ENCODE measurements at regions of chr7 and their contacts with region 1.

Region 1: DNA sequence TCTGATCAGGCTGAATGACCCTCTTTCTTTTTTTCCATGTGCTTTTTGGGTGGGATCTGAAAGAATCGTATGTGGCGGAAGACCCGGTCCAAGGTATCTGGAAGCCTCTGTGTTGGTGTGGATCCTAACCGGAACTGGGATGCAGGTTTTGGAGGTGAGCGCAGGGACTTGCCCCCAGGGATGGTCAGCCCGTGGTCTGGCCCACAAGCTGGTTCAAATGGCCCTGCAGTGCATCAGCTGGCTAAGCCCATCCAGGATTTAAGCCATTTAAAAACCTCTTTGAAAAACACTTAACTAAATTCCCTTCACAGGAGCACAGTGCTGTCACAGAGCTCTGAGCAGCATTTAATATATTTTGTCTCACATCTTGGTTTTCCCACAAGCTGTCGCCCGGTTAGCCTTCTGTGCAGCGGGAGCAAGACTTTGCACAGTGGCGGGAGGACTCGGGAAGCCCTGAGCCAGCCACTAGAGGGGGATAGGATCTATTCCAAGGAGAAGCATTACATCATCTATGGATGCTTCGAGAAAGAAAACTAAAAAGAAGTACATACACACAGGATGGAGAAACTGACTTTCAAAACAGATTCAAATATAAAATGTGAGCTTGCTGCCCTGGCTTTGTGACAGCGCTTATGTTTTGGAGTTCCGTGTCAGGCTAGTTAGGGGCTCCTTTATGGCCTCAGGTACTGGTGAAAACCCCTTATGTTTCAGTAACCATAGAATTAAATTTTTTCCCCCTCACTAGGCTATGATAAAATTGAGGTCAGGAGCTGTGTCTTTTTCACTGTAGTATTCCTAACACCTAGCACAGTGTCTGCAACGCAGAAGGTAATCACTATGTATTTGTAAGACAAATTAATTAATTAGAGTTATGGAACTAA is 11.3 kb downstream of the CPA2 start:
- DNase-seq: peak in 5 of 6 donors; percentile 67 to 83 (median 71)
- ATAC-seq: peak; percentile 22 to 71 (median 45)
- H3K4me3 ChIP-seq: no peak overlapping the region
- H3K27ac ChIP-seq: peak overlapping the region in 2 of 4 donors; percentile 63 to 71
- H3K4me1 ChIP-seq: peaks cover 26 to 51% (median 28%) of the 10 kb centered on the region in 3 donors
- H3K27me3 ChIP-seq: no peaks in the 10 kb centered on the region
- CTCF ChIP-seq: peak in 2 of 4 donors; percentile 10 to 37

Region 2: GRCh38 chr7:130387628-130388403 is 109.8 kb after region 1 on chr7:
- intact Hi-C with region 1: loop called in 1 of 3 experiments (anchors 5 kb)
- DNase-seq: peak in 5 of 6 donors; percentile 42 to 84 (median 73)
- ATAC-seq: peak; percentile 9 to 48 (median 27)
- H3K4me3 ChIP-seq: no peak overlapping the region
- H3K27ac ChIP-seq: peak overlapping the region; percentile 91 to 96 (median 96)
- H3K4me1 ChIP-seq: peaks cover 0 to 7% (median 0%) of the 10 kb centered on the region in 3 donors
- H3K27me3 ChIP-seq: no peaks in the 10 kb centered on the region
- CTCF ChIP-seq: no peak

Region 3: DNA sequence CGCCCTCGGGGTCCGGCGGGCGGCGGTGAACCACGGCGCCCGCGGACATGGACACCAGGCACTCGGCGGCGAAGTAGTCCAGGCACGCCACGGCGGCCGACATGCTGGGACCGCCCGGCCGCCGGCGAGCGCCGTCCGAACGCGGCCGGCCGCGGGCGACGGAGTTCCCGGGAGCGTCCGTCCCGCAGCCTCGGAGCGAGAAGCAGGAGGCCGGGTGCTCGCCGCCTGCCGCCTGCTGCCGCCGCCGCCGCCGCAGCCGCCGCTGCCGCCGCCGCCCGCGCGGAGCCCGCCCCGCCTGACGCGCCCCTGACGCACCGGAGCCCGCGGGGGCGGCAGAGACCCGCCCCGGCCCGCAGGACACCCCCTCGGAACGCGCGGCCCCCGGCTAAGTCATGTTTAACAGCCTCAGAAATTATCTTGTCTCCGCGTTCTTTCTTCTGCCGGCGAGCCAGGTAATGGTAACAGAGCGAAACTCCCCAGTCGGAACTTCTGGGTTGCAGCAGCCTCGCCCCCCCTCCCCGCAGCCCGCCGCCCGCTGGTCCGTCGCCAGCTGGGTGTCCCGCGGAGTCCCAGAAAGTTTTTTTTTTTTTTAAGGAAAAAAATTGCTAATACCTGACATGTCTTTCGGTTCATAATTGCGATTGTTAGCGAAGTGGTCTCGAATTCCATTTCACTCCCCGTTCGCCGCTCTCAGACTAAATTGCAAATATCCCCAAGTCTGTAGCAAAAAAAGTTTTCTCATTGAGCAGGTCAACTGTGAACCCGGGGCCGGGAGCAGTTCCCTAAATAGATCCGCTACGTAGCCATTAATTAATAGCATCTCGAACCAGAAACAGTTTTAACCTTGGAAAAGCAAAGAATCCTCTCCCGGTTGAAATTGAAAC is 456.2 kb after region 1 on chr7 and contains the start of gene KLF14:
- intact Hi-C with region 1: no loop called
- DNase-seq: peak; percentile 51 to 75 (median 60)
- ATAC-seq: peak; percentile 72 to 79 (median 76)
- H3K4me3 ChIP-seq: peak within 1 kb of the TSS; percentile 27 to 58 (median 46)
- H3K27ac ChIP-seq: peak within 1 kb of the TSS in 1 of 4 donors; percentile 59
- H3K4me1 ChIP-seq: no peaks in the 10 kb centered on the region
- H3K27me3 ChIP-seq: peaks cover 0 to 35% (median 10%) of the 10 kb centered on the region in 4 donors
- CTCF ChIP-seq: no peak
- total RNA-seq, gene KLF14: 0.15 to 0.40 (median 0.24) TPM